ENCODE measurements at regions of chr6 and their contacts with region 1.

Region 1: GRCh38 chr6:106444777-106445507 is 84.4 kb downstream of the CRYBG1 start:
- DNase-seq: no peak
- ATAC-seq: peak; percentile 72

Region 2: GRCh38 chr6:106431972-106432371 is 13.0 kb before region 1 on chr6:
- intact Hi-C with region 1: no loop called
- DNase-seq: no peak
- ATAC-seq: no peak

Region 3: GRCh38 chr6:106560996-106561685 is 116.2 kb after region 1 on chr6:
- intact Hi-C with region 1: loop called (anchors 5 kb)
- DNase-seq: no peak
- ATAC-seq: peak; percentile 28

Region 4: GRCh38 chr6:106894978-106895702 is 450.2 kb after region 1 on chr6:
- intact Hi-C with region 1: no loop called
- DNase-seq: no peak
- ATAC-seq: no peak

Measured in sciatic nerve (tissue), 2 donors.